ENCODE measurements at regions of chr20 and their contacts with region 1.

Region 1: GRCh38 chr20:32902456-32903420 is 44.0 kb downstream of the EFCAB8 start:
- DNase-seq: peak; percentile 64 to 70 (median 66)
- H3K4me3 ChIP-seq: no peak overlapping the region
- H3K4me3 Mint-ChIP-seq: peak overlapping the region in 3 of 8 donors; percentile 26 to 42 (median 33)
- H3K27ac ChIP-seq: no peak overlapping the region
- H3K27ac Mint-ChIP-seq: peak overlapping the region in 5 of 7 donors; percentile 5 to 80 (median 60)
- H3K4me1 ChIP-seq: peaks cover 17% of the 10 kb centered on the region
- H3K4me1 Mint-ChIP-seq: peaks cover 12 to 33% (median 23%) of the 10 kb centered on the region in 4 donors
- H3K27me3 ChIP-seq: no peaks in the 10 kb centered on the region
- H3K27me3 Mint-ChIP-seq: no peaks in the 10 kb centered on the region

Region 2: DNA sequence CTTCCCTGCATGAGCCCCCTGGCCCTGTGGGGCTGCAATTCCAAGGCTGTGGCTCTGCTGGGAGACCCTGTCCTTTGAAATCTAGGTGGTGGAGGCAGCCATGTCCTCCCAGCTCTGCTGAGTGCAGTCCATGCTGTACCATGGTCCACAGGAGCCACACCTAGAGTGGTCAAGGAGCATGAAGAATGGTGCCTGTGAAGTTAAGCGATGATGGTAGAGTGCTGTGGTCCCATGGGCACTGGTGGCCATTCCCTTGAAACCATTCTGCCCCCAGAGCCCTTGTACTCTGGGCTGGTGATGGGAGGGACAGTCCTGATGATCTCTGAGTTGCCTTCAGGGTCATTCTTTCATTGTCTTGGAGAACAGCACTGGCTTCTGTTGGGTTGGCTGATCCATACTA is 11.3 kb after region 1 on chr20:
- CTCF ChIA-PET with region 1: interaction called, 14 read pairs
- POLR2A ChIA-PET with region 1: no interaction called
- intact Hi-C with region 1: no loop called
- DNase-seq: no peak
- H3K4me3 ChIP-seq: no peak overlapping the region
- H3K4me3 Mint-ChIP-seq: no peak overlapping the region
- H3K27ac ChIP-seq: no peak overlapping the region
- H3K27ac Mint-ChIP-seq: no peak overlapping the region
- H3K4me1 ChIP-seq: no peaks in the 10 kb centered on the region
- H3K4me1 Mint-ChIP-seq: peaks cover 0 to 2% (median under 1%) of the 10 kb centered on the region in 4 donors
- H3K27me3 ChIP-seq: no peaks in the 10 kb centered on the region
- H3K27me3 Mint-ChIP-seq: no peaks in the 10 kb centered on the region

Region 3: GRCh38 chr20:33005132-33005566 is 102.4 kb after region 1 on chr20:
- CTCF ChIA-PET with region 1: interaction called, 23 read pairs
- POLR2A ChIA-PET with region 1: no interaction called
- intact Hi-C with region 1: no loop called
- DNase-seq: peak in 4 of 5 donors; percentile 19 to 32 (median 28)
- H3K4me3 ChIP-seq: no peak overlapping the region
- H3K4me3 Mint-ChIP-seq: no peak overlapping the region
- H3K27ac ChIP-seq: no peak overlapping the region
- H3K27ac Mint-ChIP-seq: peak overlapping the region in 1 of 7 donors; percentile 35
- H3K4me1 ChIP-seq: peaks cover 11% of the 10 kb centered on the region
- H3K4me1 Mint-ChIP-seq: peaks cover 6 to 29% (median 14%) of the 10 kb centered on the region in 4 donors
- H3K27me3 ChIP-seq: no peaks in the 10 kb centered on the region
- H3K27me3 Mint-ChIP-seq: no peaks in the 10 kb centered on the region

Region 4: GRCh38 chr20:33019465-33020277 is 116.9 kb after region 1 on chr20:
- CTCF ChIA-PET with region 1: no interaction called
- POLR2A ChIA-PET with region 1: no interaction called
- intact Hi-C with region 1: no loop called
- DNase-seq: no peak
- H3K4me3 ChIP-seq: no peak overlapping the region
- H3K4me3 Mint-ChIP-seq: no peak overlapping the region
- H3K27ac ChIP-seq: no peak overlapping the region
- H3K27ac Mint-ChIP-seq: peak overlapping the region in 2 of 7 donors; percentile 7 to 77
- H3K4me1 ChIP-seq: no peaks in the 10 kb centered on the region
- H3K4me1 Mint-ChIP-seq: peaks cover 0 to 20% (median 11%) of the 10 kb centered on the region in 4 donors
- H3K27me3 ChIP-seq: no peaks in the 10 kb centered on the region
- H3K27me3 Mint-ChIP-seq: no peaks in the 10 kb centered on the region

Region 5: DNA sequence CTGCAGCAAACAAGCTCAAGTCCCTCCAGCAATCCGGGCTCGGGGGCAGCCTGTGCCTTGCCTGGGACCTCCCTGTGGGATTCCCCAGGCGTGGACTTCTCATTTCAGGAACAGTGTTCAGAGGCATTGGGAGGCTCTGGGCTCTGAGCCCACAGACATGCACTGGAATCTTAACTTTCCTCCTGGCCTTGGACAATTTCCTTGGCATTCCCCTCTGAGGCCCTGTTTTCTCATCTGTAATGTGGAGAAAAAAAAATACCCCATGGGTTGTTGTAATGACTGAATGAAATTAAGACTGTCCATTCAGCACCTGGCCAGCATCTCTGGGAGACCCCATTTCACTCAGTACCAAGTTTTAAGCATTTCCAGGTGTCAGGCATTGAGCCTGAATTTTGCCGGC is 194.3 kb after region 1 on chr20:
- CTCF ChIA-PET with region 1: interaction called, 36 read pairs
- POLR2A ChIA-PET with region 1: no interaction called
- intact Hi-C with region 1: loop called (anchors 1 kb)
- DNase-seq: no peak
- H3K4me3 ChIP-seq: no peak overlapping the region
- H3K4me3 Mint-ChIP-seq: no peak overlapping the region
- H3K27ac ChIP-seq: no peak overlapping the region
- H3K27ac Mint-ChIP-seq: no peak overlapping the region
- H3K4me1 ChIP-seq: peaks cover 6% of the 10 kb centered on the region
- H3K4me1 Mint-ChIP-seq: peaks cover 0 to 6% (median 3%) of the 10 kb centered on the region in 4 donors
- H3K27me3 ChIP-seq: no peaks in the 10 kb centered on the region
- H3K27me3 Mint-ChIP-seq: peaks cover 2 to 3% of the 10 kb centered on the region in 2 donors

Region 6: DNA sequence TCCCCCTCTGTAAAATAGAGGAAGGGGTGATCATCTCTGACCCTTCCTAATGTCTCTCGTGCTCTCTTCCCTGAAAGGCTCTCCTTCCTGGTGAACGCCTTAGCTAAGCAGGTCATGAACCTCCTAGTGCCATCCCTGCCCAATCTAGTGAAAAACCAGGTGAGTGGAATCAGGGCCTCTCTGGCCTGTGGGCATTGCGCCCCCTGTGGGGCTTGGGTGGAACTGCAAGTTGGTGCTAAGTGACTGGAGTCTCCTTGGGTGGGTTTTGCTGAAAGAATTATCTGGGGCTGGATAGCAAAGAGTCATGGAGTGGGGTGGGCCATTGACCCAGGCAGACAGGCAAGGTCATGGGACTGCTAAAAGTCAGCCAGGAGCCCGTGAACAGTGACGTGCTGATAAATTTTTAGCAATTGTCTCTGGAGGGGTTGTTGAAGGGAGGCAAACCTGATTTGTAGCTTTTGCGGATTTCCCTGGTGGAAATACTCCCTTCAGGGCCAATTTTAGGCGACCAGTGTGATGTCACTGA is 389.2 kb after region 1 on chr20:
- CTCF ChIA-PET with region 1: interaction called, 22 read pairs
- POLR2A ChIA-PET with region 1: no interaction called
- intact Hi-C with region 1: loop called (anchors 1 kb)
- DNase-seq: peak; percentile 49 to 64 (median 55)
- H3K4me3 ChIP-seq: no peak overlapping the region
- H3K4me3 Mint-ChIP-seq: no peak overlapping the region
- H3K27ac ChIP-seq: no peak overlapping the region
- H3K27ac Mint-ChIP-seq: no peak overlapping the region
- H3K4me1 ChIP-seq: no peaks in the 10 kb centered on the region
- H3K4me1 Mint-ChIP-seq: peaks cover 0 to 2% (median 0%) of the 10 kb centered on the region in 4 donors
- H3K27me3 ChIP-seq: no peaks in the 10 kb centered on the region
- H3K27me3 Mint-ChIP-seq: peaks cover 1 to 3% of the 10 kb centered on the region in 2 donors

Region 7: GRCh38 chr20:34129518-34130162 is 1226.9 kb after region 1 on chr20:
- CTCF ChIA-PET with region 1: no interaction called
- POLR2A ChIA-PET with region 1: no interaction called
- intact Hi-C with region 1: loop called (anchors 5 kb)
- DNase-seq: peak; percentile 65 to 74 (median 71)
- H3K4me3 ChIP-seq: no peak overlapping the region
- H3K4me3 Mint-ChIP-seq: peak overlapping the region in 6 of 8 donors; percentile 3 to 77 (median 36)
- H3K27ac ChIP-seq: no peak overlapping the region
- H3K27ac Mint-ChIP-seq: no peak overlapping the region
- H3K4me1 ChIP-seq: peaks cover 4% of the 10 kb centered on the region
- H3K4me1 Mint-ChIP-seq: peaks cover 4 to 6% (median 4%) of the 10 kb centered on the region in 4 donors
- H3K27me3 ChIP-seq: no peaks in the 10 kb centered on the region
- H3K27me3 Mint-ChIP-seq: peaks cover 4 to 6% of the 10 kb centered on the region in 2 donors

Measured in CD4-positive, alpha-beta memory T cell (primary cell).